WTC11 (cell line): ENCODE measurements at regions of chr14 and their contacts with region 1.

Region 1: DNA sequence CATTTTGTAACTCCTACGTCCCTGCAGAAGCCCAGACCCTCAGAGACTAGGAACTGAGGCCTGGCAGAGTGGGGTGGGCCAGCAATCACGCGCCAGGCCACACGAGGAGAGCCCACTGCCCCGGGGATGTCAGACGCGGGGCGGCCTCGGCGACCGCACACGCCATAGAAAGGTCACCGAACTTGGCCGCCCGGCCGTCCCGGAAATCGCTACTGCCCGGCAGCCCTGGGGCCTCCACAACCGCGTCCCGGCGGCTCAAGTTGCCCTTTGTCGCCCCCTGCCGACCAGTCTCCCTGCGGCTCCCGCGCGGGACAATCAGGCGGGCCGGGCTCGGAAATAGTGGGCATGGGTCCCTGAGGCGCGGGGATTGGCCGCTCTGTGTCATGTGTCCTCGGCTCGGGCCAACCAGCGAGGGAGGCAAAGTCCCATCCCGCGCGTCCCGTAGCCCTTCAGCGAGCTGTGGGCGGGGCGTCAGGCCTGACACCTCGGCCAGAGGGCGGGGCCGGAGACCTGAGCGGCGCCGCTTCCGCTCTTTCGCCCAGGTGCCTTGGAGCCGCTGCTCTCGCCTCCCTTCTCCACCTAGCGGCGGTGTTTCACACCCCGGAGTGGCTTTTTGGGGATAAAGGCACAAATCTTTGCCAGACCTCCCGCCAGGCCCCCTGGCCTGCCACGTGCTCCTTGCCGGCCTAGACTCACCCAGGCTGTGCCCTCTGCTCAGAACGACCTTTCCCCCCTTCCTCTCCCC is 33.4 kb upstream of the DEGS2 start:
- DNase-seq: peak; percentile 100
- ATAC-seq: peak; percentile 99
- H3K4me3 Mint-ChIP-seq: peak overlapping the region; percentile 43
- H3K27ac Mint-ChIP-seq: peak overlapping the region; percentile 89; the same call in 1 of the 2 replicates
- H3K4me1 Mint-ChIP-seq: peaks cover 11% of the 10 kb centered on the region
- H3K27me3 Mint-ChIP-seq: peaks cover 3% of the 10 kb centered on the region; the same call in 1 of the 2 replicates
- CTCF ChIP-seq: peak; percentile 76

Region 2: DNA sequence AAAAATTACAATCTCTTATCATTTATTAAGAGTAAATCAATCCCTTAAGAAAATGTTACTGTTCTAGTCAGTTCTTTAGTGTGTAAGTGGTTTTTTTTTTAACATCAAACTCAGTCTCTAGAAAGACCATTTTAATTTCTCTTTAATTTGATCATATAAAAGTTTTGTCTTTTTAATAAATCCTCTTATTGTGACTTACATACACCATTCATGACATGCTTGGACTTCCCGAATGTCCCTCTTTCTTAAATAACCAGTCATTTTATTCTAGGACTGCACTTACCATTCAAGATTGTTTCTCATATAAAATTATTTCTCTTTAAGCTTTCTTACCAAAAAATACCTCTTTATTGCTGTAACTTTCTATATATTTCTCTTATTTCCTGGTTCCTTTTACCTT is 188.5 kb before region 1 on chr14:
- CTCF ChIA-PET with region 1: no interaction called
- POLR2A ChIA-PET with region 1: no interaction called
- DNase-seq: no peak
- ATAC-seq: no peak
- H3K4me3 Mint-ChIP-seq: no peak overlapping the region
- H3K27ac Mint-ChIP-seq: no peak overlapping the region
- H3K4me1 Mint-ChIP-seq: peaks cover 7% of the 10 kb centered on the region
- H3K27me3 Mint-ChIP-seq: no peaks in the 10 kb centered on the region; the same call in 1 of the 2 replicates
- CTCF ChIP-seq: no peak

Region 3: DNA sequence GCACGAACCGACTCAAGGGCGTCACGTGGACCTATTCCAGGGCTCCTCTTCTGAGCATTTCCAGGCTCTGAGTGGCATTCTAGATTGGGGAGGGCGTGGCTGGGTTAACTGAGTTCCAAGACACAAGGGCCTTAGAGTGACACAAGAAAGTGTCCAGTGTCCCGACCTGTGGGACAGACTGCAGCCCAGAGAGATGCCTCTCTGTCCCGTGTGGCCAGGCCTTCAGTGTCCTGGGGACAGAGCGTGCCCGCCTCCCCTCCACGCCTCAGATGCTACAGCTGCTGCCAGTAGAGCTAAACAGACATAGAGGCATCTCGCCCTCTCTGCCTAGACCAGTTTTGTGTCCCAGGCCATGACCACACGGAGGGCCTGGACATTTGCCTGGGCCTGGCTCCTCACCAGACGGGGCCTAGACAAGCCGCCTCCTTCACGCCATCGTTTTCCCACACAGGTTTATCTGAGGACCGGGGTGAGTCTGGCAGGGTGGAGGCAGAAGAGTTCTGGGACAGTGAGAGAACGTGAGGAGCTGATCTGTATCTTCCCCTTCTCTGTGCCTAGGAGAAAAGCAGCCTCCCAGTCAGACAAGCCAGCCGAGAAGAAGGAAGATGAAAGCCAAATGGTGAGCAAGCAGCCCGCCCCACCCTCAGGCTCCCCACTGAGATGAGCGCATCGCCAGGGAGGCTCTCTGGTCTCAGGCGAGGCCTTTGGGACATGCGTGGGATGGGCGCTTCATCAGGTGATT is 60.5 kb before region 1 on chr14:
- CTCF ChIA-PET with region 1: interaction called, 14 read pairs
- POLR2A ChIA-PET with region 1: interaction called, 3 read pairs
- DNase-seq: no peak
- ATAC-seq: no peak
- H3K4me3 Mint-ChIP-seq: no peak overlapping the region
- H3K27ac Mint-ChIP-seq: 0 out of 2 replicates have a peak overlapping the region, but pooled peaks have one; percentile 41
- H3K4me1 Mint-ChIP-seq: peaks cover 12% of the 10 kb centered on the region
- H3K27me3 Mint-ChIP-seq: no peaks in the 10 kb centered on the region
- CTCF ChIP-seq: no peak

Region 4: DNA sequence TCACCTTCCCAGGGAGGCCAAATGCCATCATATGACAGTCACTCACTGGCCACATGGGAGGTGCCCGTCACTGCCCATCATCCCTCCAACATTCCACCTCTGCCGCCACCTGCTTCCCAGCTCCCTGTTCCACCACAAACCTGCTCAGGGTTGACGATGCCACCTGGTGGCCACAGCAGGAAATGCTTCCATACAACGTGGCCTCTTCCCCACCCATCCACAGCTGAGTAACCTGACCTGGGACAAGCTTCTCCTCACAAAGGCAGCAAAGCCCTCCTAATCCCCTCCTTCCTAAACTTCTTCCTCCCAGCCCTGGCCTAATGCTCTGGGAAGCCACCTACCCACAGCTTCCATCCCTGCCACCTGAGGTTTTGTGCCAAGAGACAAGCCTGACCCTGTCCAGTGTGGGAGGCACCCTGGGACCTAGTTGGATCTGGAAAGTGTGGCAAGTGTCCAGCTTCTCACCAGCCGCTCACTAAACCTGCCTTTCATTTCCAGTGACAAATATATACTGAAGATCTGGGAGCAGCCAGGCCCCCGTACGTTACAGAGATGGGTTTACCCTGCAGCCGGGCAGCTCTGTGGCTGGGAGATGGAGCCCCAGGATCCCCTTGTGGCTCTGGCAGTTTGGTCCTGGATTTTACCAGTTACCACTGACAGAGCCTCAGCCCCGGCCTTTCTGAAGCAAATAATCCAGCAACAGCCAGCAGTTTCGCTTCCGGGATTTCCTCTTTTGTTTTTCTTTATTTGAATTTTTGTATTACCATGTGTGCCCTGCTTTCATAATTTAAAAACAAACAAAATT is 37.6 kb before region 1 on chr14:
- CTCF ChIA-PET with region 1: interaction called, 67 read pairs
- POLR2A ChIA-PET with region 1: no interaction called
- DNase-seq: peak; percentile 89
- ATAC-seq: peak; percentile 69
- H3K4me3 Mint-ChIP-seq: no peak overlapping the region
- H3K27ac Mint-ChIP-seq: no peak overlapping the region
- H3K4me1 Mint-ChIP-seq: peaks cover 10% of the 10 kb centered on the region; the same call in 1 of the 2 replicates
- H3K27me3 Mint-ChIP-seq: peaks cover 51% of the 10 kb centered on the region
- CTCF ChIP-seq: peak; percentile 84

Region 5: GRCh38 chr14:100203949-100204834 is 11.3 kb after region 1 on chr14:
- CTCF ChIA-PET with region 1: interaction called, 31 read pairs
- POLR2A ChIA-PET with region 1: no interaction called
- DNase-seq: no peak
- ATAC-seq: no peak
- H3K4me3 Mint-ChIP-seq: no peak overlapping the region
- H3K27ac Mint-ChIP-seq: no peak overlapping the region
- H3K4me1 Mint-ChIP-seq: peaks cover 8% of the 10 kb centered on the region
- H3K27me3 Mint-ChIP-seq: peaks cover 3% of the 10 kb centered on the region; the same call in 1 of the 2 replicates
- CTCF ChIP-seq: no peak

Region 6: GRCh38 chr14:100221533-100222223 is 28.8 kb after region 1 on chr14:
- CTCF ChIA-PET with region 1: interaction called, 52 read pairs
- POLR2A ChIA-PET with region 1: interaction called, 5 read pairs
- DNase-seq: peak; percentile 57
- ATAC-seq: peak; percentile 83
- H3K4me3 Mint-ChIP-seq: no peak overlapping the region
- H3K27ac Mint-ChIP-seq: no peak overlapping the region
- H3K4me1 Mint-ChIP-seq: peaks cover 2% of the 10 kb centered on the region; the same call in 1 of the 2 replicates
- H3K27me3 Mint-ChIP-seq: no peaks in the 10 kb centered on the region
- CTCF ChIP-seq: no peak

Region 7: DNA sequence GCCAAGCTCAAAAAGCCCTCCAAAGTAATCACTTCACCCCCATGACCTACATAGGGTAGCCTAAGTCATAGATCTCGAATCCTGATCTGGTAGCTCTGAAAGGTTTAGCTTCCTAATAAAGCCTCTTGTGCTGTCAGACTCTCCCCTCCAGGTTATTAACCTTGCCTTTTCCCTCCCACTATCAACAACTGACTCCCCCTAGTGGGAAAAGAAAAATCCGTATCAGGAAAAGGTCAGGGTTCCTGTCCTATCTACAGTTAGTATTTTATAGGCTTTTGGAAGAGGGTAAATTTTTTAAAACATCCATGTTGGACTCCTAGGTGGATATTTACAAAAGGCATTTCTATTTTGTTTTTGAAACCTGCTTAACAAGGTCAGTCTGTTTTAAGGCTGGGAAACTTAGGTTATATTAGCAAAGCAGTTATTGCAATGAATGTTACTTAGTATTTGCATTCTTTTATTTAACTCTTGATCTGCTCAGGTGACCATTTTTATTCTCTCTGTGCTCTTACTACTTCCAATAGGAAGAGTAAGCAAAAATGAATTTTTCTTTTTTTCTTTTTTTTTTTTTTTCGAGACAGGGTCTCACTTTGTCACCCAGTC is 54.1 kb after region 1 on chr14:
- CTCF ChIA-PET with region 1: interaction called, 23 read pairs
- POLR2A ChIA-PET with region 1: no interaction called
- DNase-seq: no peak
- ATAC-seq: peak; percentile 80
- H3K4me3 Mint-ChIP-seq: 0 out of 2 replicates have a peak overlapping the region, but pooled peaks have one; percentile 11
- H3K27ac Mint-ChIP-seq: peak overlapping the region; percentile 77
- H3K4me1 Mint-ChIP-seq: peaks cover 61% of the 10 kb centered on the region
- H3K27me3 Mint-ChIP-seq: no peaks in the 10 kb centered on the region
- CTCF ChIP-seq: peak; percentile 27

Region 8: GRCh38 chr14:100275214-100275613 is 82.4 kb after region 1 on chr14:
- CTCF ChIA-PET with region 1: no interaction called
- POLR2A ChIA-PET with region 1: no interaction called
- DNase-seq: no peak
- ATAC-seq: peak; percentile 24; the same call in 1 of the 2 replicates
- H3K4me3 Mint-ChIP-seq: peak overlapping the region; percentile 39
- H3K27ac Mint-ChIP-seq: peak overlapping the region; percentile 57
- H3K4me1 Mint-ChIP-seq: peaks cover 69% of the 10 kb centered on the region
- H3K27me3 Mint-ChIP-seq: no peaks in the 10 kb centered on the region
- CTCF ChIP-seq: no peak

Region 9: GRCh38 chr14:100375963-100376735 is 183.3 kb after region 1 on chr14:
- CTCF ChIA-PET with region 1: no interaction called
- POLR2A ChIA-PET with region 1: no interaction called
- DNase-seq: peak; percentile 94
- ATAC-seq: peak; percentile 88
- H3K4me3 Mint-ChIP-seq: peak within 1 kb of the TSS; percentile 96
- H3K27ac Mint-ChIP-seq: peak within 1 kb of the TSS; percentile 98
- H3K4me1 Mint-ChIP-seq: peaks cover 51% of the 10 kb centered on the region
- H3K27me3 Mint-ChIP-seq: no peaks in the 10 kb centered on the region
- CTCF ChIP-seq: no peak

Region 10: DNA sequence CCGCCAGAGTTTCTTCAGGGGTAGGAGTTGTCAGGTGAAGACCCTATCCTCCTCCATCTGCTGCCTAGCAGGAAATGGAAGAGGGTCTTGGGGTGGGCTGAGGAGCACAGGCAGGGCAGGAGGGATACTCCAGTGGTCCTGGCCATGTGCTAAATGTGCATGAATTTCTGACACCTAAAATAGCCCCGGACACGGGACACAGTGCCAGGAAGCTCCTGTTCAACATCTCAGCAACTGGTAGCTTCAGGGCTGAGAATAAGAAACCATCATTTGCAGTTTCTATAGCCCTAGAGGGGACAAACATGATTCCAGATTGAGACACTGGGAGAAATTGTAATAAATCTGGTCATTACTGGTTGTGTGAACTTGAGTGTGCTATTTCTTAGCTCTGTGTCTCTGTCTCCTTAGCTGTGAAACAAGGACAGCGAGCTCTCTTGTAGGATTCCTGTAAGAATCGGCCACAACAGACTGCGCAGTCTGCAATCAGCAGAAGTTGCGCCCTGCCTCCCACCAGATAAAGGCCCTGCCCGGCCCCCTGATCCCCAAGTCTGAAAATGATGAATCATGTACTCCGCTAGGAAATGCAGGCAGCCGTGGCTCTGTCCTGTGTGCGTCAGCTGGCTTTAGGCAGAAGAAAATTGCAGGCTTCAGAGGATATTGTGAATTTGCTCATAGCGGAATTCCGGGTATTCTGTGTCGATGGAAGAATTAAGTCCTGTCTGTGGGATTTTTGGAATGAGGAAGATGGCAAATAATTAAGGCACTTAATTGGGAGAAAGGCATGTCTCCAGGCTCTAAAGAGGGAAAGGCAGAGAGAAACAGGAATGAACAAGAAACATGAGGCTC is 597.9 kb after region 1 on chr14:
- CTCF ChIA-PET with region 1: no interaction called
- POLR2A ChIA-PET with region 1: no interaction called
- DNase-seq: no peak
- ATAC-seq: no peak
- H3K4me3 Mint-ChIP-seq: no peak overlapping the region
- H3K27ac Mint-ChIP-seq: no peak overlapping the region
- H3K4me1 Mint-ChIP-seq: peaks cover 23% of the 10 kb centered on the region
- H3K27me3 Mint-ChIP-seq: no peaks in the 10 kb centered on the region; the same call in 1 of the 2 replicates
- CTCF ChIP-seq: no peak